RWPE1 (cell line): ENCODE measurements at regions of chr13 and their contacts with region 1.

Region 1: DNA sequence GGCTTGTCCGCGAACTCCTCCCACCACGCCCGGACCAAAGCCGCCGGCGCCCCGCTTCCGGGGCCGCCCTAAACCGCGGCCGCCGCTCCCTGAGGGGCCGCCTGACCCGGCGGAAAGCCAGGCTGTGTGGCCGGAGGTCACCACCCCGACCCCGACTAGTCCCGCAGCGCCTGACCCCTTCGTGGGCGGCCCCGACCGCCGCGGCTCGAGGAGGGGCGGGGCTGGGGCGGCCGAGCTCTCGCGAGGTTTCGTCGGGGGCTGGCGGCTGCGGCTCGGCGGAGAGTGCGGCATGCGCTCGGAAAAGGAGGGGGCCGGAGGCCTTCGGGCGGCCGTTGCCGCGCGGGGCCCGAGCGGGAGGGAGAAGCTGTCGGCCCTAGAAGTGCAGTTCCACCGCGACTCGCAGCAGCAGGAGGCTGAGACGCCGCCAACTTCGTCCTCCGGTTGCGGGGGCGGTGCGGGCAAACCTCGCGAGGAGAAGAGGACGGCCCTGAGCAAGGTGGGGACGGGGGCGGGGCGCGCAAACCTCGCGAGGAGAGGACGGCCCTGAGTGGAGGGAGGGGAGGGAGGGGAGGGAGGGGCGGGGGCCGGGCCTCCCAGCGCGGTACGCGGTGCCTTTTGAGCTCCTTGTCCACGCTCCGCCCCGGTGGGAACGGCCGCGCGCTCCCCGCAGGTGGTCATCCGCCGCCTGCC is at the start of gene UPF3A:
- DNase-seq: peak; percentile 87
- H3K27ac ChIP-seq: peak within 1 kb of the TSS; percentile 99
- CTCF ChIP-seq: no peak

Region 2: GRCh38 chr13:113976711-113977684 is 304.5 kb before region 1 on chr13:
- CTCF ChIA-PET with region 1: no interaction called
- POLR2A ChIA-PET with region 1: no interaction called
- DNase-seq: peak; percentile 73
- H3K27ac ChIP-seq: peak overlapping the region; percentile 78
- CTCF ChIP-seq: no peak

Region 3: GRCh38 chr13:114264886-114265611 is 16.4 kb before region 1 on chr13:
- CTCF ChIA-PET with region 1: no interaction called
- POLR2A ChIA-PET with region 1: no interaction called
- DNase-seq: no peak
- H3K27ac ChIP-seq: no peak overlapping the region
- CTCF ChIP-seq: no peak

Region 4: DNA sequence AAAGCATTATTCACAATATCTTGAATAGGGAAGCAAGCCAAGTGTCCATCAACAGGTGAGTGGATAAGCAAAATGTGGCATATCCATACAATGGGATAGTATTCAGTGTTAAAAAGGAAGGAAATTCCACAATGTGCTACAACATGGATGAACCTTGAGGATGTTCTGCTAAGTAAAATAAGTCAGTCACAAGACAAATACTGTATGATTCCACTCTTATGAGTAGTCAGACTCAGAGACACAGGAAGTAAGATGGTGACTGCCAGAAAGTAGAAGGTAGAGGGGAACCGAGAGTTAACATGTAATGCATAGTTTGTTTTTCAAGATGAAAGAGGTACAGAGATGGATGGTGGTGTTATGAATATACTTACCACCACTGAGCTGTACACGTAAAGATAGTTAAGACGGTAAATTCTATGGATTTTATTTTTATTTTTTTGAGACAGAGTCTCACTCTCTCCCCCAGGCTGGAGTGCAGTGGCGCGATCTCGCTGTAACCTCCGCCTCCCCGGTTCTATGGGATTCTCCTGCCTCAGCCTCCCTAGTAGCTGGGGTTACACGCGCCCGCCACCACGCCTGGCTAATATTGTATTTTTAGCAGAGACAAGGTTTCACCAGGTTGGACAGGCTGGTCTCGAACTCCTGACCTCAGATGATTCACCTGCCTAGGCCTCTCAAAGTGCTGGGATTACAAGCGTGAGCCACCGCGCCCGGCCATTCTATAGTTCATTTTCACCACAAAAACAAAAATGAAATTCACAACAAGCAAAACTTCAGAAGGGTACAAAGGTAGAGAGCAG is 31.8 kb after region 1 on chr13:
- CTCF ChIA-PET with region 1: no interaction called
- POLR2A ChIA-PET with region 1: interaction called, 12 read pairs
- DNase-seq: no peak
- H3K27ac ChIP-seq: peak overlapping the region; percentile 93
- CTCF ChIP-seq: no peak